ENCODE measurements at regions of chr17 and their contacts with region 1.

Region 1: GRCh38 chr17:1716076-1716995 is 6.2 kb upstream of the TLCD2 start:
- DNase-seq: peak; percentile 99
- ATAC-seq: peak; percentile 70
- H3K4me3 ChIP-seq: peak overlapping the region; percentile 86 to 97 (median 90)
- H3K27ac ChIP-seq: peak overlapping the region; percentile 100
- H3K4me1 ChIP-seq: peaks cover 51% of the 10 kb centered on the region
- H3K27me3 ChIP-seq: no peaks in the 10 kb centered on the region; a peak in 1 of 5 replicates
- CTCF ChIP-seq: peak; percentile 38
- EP300 ChIP-seq: 0 out of 4 replicates have a peak, but pooled peaks of 1 of the 2 experiments have one; percentile 45
- POLR2A ChIP-seq: peak; percentile 94 to 95
- RAD21 ChIP-seq: peak; percentile 62

Region 2: GRCh38 chr17:1422907-1423306 is 293.4 kb before region 1 on chr17:
- CTCF ChIA-PET with region 1: no interaction called
- POLR2A ChIA-PET with region 1: no interaction called
- in situ Hi-C with region 1: no loop called
- intact Hi-C with region 1: no loop called
- DNase-seq: no peak
- ATAC-seq: no peak
- H3K4me3 ChIP-seq: no peak overlapping the region
- H3K27ac ChIP-seq: no peak overlapping the region
- H3K4me1 ChIP-seq: no peaks in the 10 kb centered on the region
- H3K27me3 ChIP-seq: no peaks in the 10 kb centered on the region
- CTCF ChIP-seq: no peak
- EP300 ChIP-seq: no peak
- POLR2A ChIP-seq: no peak
- RAD21 ChIP-seq: no peak

Region 3: DNA sequence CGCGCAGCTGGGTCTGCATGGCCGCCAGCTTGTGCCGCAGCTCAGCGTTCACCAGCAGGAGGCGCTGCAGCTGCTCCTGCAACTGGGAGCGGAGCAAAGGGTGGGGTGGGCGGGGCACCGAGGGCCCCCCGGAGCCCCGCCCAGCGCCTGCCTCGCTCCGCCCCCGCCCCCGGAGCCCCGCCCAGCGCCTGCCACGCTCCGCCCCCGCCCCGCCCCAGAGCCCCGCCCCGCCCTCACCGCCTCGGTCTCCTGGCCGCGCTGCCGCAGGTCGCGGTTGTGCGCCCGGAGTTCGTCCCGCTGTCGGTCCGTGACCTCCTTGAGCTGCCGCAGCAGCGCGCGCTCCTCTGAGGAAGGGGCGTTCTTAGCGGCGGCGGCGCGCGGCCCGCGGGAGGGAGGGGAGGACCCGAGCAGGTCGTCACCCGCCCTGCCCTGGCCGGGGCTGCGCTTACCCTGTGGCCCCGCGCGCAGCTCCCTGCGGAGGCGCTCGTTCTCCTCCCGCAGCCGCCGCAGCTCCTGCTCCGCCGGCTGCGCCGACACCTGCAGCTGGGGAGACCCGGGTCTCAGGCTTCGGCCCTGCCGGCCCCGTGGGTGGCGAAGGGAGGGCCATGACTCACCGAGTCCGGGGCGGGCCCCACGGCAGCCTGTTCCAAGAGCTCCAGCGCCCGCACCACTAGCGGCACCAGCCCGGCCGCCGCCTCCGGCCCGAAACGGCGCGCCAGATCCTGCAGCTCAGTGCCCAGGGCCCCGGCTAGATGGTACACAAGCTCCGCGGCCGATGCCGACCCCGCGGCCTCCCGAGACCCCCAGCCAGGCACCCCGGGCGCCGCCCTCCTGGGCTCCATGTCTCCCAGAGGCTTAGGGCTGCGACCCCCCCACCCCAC is 67.1 kb before region 1 on chr17:
- CTCF ChIA-PET with region 1: no interaction called
- POLR2A ChIA-PET with region 1: interaction called, 42 read pairs
- in situ Hi-C with region 1: no loop called
- intact Hi-C with region 1: no loop called
- DNase-seq: peak; percentile 83
- ATAC-seq: peak; percentile 73
- H3K4me3 ChIP-seq: peak overlapping the region; percentile 74 to 83 (median 81)
- H3K27ac ChIP-seq: peak overlapping the region; percentile 93
- H3K4me1 ChIP-seq: peaks cover 64% of the 10 kb centered on the region
- H3K27me3 ChIP-seq: peaks cover 0 to 1% of the 10 kb centered on the region in 2 experiments; a peak in 1 of 5 replicates
- CTCF ChIP-seq: peak; percentile 85
- EP300 ChIP-seq: no peak; a peak in 1 of 4 replicates
- POLR2A ChIP-seq: peak; percentile 47 to 90; a peak in 3 of 4 replicates
- RAD21 ChIP-seq: peak; percentile 38

Region 4: DNA sequence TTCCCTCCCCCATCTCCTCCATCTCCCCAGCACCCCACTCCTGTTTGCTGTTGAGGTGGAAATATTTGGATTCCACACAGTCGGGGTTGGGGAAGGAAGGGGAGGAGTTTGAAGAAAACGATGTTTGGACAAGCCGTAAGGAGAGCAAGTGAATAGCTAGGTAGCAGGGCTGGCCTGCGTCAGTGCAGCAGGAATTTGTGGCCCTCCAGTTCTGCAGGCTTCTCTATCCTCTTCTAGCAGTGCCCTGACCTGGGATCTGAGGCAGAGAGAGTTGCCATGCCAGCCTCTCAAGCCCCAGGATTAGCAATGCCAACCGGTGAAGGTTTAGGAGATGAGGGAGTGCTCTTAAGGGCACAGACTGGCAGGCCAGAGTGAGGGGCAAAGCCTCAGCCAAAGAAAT is 18.7 kb before region 1 on chr17:
- CTCF ChIA-PET with region 1: no interaction called
- POLR2A ChIA-PET with region 1: interaction called, 12 read pairs
- in situ Hi-C with region 1: no loop called
- intact Hi-C with region 1: no loop called
- DNase-seq: no peak
- ATAC-seq: peak; percentile 61
- H3K4me3 ChIP-seq: peak overlapping the region in 2 of 3 experiments; percentile 19 to 46; a peak in 1 of 6 replicates
- H3K27ac ChIP-seq: no peak overlapping the region
- H3K4me1 ChIP-seq: peaks cover 19% of the 10 kb centered on the region
- H3K27me3 ChIP-seq: peaks cover 0 to 1% of the 10 kb centered on the region in 2 experiments; a peak in 1 of 5 replicates
- CTCF ChIP-seq: no peak
- EP300 ChIP-seq: no peak
- POLR2A ChIP-seq: no peak
- RAD21 ChIP-seq: no peak

Region 5: GRCh38 chr17:1746975-1747543 is 30.7 kb after region 1 on chr17:
- CTCF ChIA-PET with region 1: no interaction called
- POLR2A ChIA-PET with region 1: interaction called, 299 read pairs
- in situ Hi-C with region 1: no loop called
- intact Hi-C with region 1: loop called (anchors 2 kb)
- DNase-seq: no peak
- ATAC-seq: no peak
- H3K4me3 ChIP-seq: no peak overlapping the region
- H3K27ac ChIP-seq: peak overlapping the region; percentile 11
- H3K4me1 ChIP-seq: peaks cover 60% of the 10 kb centered on the region
- H3K27me3 ChIP-seq: no peaks in the 10 kb centered on the region
- CTCF ChIP-seq: no peak
- EP300 ChIP-seq: no peak
- POLR2A ChIP-seq: peak in 1 of 2 experiments; percentile 20; a peak in 1 of 4 replicates
- RAD21 ChIP-seq: no peak

Region 6: GRCh38 chr17:1769822-1770477 is 53.6 kb after region 1 on chr17:
- CTCF ChIA-PET with region 1: no interaction called
- POLR2A ChIA-PET with region 1: interaction called, 480 read pairs
- in situ Hi-C with region 1: loop called (anchors 5 kb)
- intact Hi-C with region 1: no loop called
- DNase-seq: peak; percentile 95
- ATAC-seq: peak; percentile 89
- H3K4me3 ChIP-seq: peak overlapping the region in 1 of 3 experiments; percentile 14; a peak in 1 of 6 replicates
- H3K27ac ChIP-seq: peak overlapping the region; percentile 83
- H3K4me1 ChIP-seq: peaks cover 55% of the 10 kb centered on the region
- H3K27me3 ChIP-seq: no peaks in the 10 kb centered on the region
- CTCF ChIP-seq: peak; percentile 48
- EP300 ChIP-seq: peak in 1 of 2 experiments; percentile 52; a peak in 1 of 4 replicates
- POLR2A ChIP-seq: no peak; a peak in 1 of 4 replicates
- RAD21 ChIP-seq: peak; percentile 32; the same call in 1 of the 2 replicates

Region 7: DNA sequence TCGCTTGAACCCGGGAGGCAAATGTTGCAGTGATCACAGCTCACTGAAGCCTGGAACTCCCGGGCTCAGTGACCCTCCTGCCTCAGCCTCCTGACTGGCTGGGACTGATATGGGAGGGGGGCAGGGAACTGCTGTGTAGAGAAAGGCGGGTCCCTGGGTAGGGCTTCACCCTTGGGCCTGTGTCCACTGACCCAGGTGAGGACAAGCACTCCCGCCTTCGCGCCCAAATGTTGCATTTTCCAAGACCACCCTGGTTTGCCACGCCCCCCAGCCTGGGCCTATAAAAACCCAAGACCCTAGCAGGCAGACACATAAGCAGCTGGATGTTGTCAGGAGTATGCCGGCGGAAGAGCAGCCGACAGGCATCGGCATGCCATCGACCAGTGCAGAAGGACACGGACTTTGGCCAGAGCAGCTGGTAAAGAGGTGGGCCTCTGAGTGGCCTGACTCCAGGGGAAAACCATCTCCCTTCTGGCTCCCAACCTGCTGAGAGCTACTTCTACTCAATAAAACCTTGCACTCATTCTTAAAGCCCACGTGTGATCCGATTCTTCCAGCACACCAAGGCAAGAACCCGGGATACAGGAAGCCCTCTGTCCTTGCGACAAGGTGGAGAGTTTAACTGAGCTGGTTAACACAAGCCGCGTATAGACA is 94.2 kb after region 1 on chr17:
- CTCF ChIA-PET with region 1: no interaction called
- POLR2A ChIA-PET with region 1: interaction called, 44 read pairs
- in situ Hi-C with region 1: no loop called
- intact Hi-C with region 1: no loop called
- DNase-seq: peak; percentile 87
- ATAC-seq: peak; percentile 100
- H3K4me3 ChIP-seq: peak overlapping the region in 2 of 3 experiments; percentile 0 to 57; a peak in 4 of 6 replicates
- H3K27ac ChIP-seq: peak overlapping the region; percentile 87
- H3K4me1 ChIP-seq: peaks cover 41% of the 10 kb centered on the region
- H3K27me3 ChIP-seq: no peaks in the 10 kb centered on the region
- CTCF ChIP-seq: 0 out of 2 replicates have a peak, but pooled peaks have one; percentile 6
- EP300 ChIP-seq: peak; percentile 25 to 66; a peak in 3 of 4 replicates
- POLR2A ChIP-seq: peak; percentile 80 to 89
- RAD21 ChIP-seq: peak; percentile 19

Region 8: GRCh38 chr17:2041561-2042366 is 325.4 kb after region 1 on chr17 and contains the start of gene OVCA2:
- CTCF ChIA-PET with region 1: no interaction called
- POLR2A ChIA-PET with region 1: no interaction called
- in situ Hi-C with region 1: loop called (anchors 25 kb)
- intact Hi-C with region 1: no loop called
- DNase-seq: peak; percentile 80
- ATAC-seq: peak; percentile 91
- H3K4me3 ChIP-seq: peak within 1 kb of the TSS; percentile 70 to 81 (median 72)
- H3K27ac ChIP-seq: peak within 1 kb of the TSS; percentile 66
- H3K4me1 ChIP-seq: peaks cover 8% of the 10 kb centered on the region
- H3K27me3 ChIP-seq: no peaks in the 10 kb centered on the region
- CTCF ChIP-seq: peak; percentile 93
- EP300 ChIP-seq: no peak
- POLR2A ChIP-seq: peak; percentile 81
- RAD21 ChIP-seq: peak; percentile 83
- total RNA-seq, gene OVCA2: 28.2 and 28.5 TPM in 2 replicates

Measured in HepG2 (cell line).